RWPE1 (cell line): ENCODE measurements at regions of chr2 and their contacts with region 1.

Region 1: GRCh38 chr2:232521959-232522622 is 1.9 kb downstream of the PRSS56 start:
- DNase-seq: peak; percentile 71
- H3K27ac ChIP-seq: no peak overlapping the region
- CTCF ChIP-seq: peak; percentile 91

Region 2: DNA sequence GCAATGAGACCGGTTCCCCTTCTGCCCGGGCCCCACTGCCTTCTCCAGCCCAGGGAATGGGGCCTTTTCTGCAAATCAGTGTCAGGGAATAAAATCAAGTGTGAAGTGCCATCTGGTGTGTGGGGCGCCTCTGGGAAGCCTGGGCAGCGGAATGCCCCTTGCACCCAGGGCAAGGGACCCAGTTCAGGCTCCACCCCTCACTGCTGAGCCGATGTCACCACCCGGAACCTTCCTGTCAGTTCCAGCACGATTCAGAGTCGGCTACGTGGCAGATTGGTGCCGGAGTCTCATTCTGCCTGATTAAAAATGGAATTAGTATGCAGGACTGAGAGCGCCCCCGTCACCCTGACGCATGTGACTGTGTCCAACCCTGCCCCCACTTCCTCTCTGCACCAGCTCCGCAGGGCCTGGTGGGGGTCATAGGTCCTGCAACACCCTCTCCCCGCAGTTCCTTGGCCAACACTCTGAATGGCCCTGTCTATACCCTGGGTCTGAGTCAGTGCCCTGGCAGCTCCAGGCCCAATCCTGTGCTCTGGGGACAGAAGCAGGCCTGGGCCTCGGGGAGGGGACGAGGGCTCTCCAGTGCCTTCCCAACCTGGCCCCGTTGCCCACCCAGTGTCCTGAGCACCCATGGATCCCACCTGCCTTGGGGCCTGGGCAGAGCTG is 74.3 kb before region 1 on chr2:
- CTCF ChIA-PET with region 1: interaction called, 24 read pairs
- POLR2A ChIA-PET with region 1: no interaction called
- DNase-seq: no peak
- H3K27ac ChIP-seq: no peak overlapping the region
- CTCF ChIP-seq: no peak

Region 3: GRCh38 chr2:232511336-232511888 is 10.7 kb before region 1 on chr2:
- CTCF ChIA-PET with region 1: interaction called, 12 read pairs
- POLR2A ChIA-PET with region 1: no interaction called
- DNase-seq: no peak
- H3K27ac ChIP-seq: no peak overlapping the region
- CTCF ChIP-seq: no peak